ENCODE measurements at regions of chr7 and their contacts with region 1.

Region 1: GRCh38 chr7:99782012-99782940 is 1.7 kb downstream of the CYP3A4 start:
- DNase-seq: no peak
- H3K4me3 ChIP-seq: no peak overlapping the region
- H3K27ac ChIP-seq: no peak overlapping the region
- H3K4me1 ChIP-seq: no peaks in the 10 kb centered on the region
- H3K27me3 ChIP-seq: no peaks in the 10 kb centered on the region
- CTCF ChIP-seq: no peak
- POLR2A ChIP-seq: no peak

Region 2: DNA sequence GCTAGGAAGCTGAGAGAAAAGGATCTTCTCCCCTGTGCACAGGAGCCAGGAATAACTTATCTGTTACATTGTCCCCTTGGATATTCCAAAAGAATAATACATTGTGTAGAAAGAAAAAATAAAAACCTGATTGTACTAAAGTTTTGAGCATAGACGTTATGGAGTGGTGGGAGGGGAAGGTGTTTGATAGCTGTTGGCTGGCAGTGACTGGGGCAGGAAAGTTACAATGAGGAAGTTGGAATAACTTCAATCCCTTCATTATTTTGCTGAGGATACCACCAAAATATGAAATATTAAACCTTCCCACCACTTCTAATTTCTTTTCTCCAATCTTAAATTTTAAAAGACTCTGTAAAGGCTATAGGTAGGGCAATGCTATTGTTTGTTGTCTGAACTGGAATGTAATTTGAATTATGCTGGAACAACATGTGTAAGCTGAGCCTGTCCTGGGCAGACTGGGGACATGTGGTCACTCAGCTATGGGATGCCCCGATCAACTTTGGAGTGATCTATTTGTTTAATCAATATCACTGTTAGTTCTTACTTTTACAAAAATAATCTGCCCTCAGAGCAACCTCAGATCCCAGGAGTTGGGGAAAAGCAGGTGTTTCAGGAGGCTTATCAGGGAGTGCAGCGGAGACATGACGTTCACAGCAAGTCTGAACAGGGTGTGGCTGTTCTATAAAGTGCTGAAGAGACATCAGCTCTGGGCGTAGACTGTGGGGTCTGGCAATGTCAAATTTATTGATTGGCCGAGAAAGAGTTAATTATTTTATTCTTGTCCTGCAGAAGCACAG is 66.3 kb after region 1 on chr7:
- intact Hi-C with region 1: loop called (anchors 5 kb)
- DNase-seq: no peak
- H3K4me3 ChIP-seq: no peak overlapping the region
- H3K27ac ChIP-seq: no peak overlapping the region
- H3K4me1 ChIP-seq: no peaks in the 10 kb centered on the region
- H3K27me3 ChIP-seq: no peaks in the 10 kb centered on the region
- CTCF ChIP-seq: no peak
- POLR2A ChIP-seq: no peak

Measured in breast epithelium (tissue), 4 donors.